Activated CD4-positive, alpha-beta T cell treated with anti-CD3 and anti-CD28 coated beads for 36 hours (primary cell): ENCODE measurements at regions of chr11 and their contacts with region 1.

Region 1: DNA sequence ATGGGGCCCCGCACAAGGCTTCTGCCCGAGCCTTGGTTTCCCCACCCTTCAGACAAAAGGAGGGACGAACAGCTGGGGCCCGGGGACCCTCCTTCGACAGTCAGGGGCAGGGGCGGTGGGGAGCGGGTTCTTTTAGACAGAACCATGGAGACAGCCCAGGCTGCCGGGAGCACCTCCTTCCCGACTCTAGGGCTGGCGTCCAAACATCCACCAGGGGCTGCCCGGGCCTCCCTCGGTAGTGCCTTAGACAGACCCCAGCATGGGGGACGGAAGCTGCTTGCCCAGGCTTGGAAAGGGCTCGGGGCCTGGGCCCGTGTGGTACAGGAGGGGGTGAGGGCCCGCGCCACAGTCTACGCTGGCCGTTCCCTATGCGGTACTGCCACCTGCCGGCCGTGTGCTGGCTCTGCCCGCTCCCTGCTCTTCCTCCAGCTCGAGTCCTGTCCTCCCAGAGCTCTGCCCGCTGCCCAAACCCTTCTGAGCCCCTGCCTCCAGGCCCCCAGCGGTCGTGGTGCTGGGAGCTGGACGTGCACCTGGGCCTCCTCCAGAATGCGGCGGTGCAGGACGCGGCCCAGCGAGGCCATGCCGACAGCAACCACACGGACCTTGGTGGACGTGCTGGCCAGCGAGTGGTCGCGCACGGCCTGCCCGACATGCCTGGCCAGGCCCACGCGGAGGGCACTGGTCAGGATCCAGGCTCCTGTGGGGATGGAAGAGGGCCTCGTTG is 20.1 kb downstream of the TSSC4 start:
- DNase-seq: peak; percentile 85
- ATAC-seq: peak; percentile 96
- H3K4me3 Mint-ChIP-seq: no peak overlapping the region
- H3K27ac Mint-ChIP-seq: no peak overlapping the region
- H3K4me1 Mint-ChIP-seq: no peaks in the 10 kb centered on the region
- H3K27me3 Mint-ChIP-seq: no peaks in the 10 kb centered on the region

Region 2: GRCh38 chr11:2166091-2166851 is 254.4 kb before region 1 on chr11:
- CTCF ChIA-PET with region 1: interaction called, 9 read pairs
- POLR2A ChIA-PET with region 1: no interaction called
- intact Hi-C with region 1: loop called (anchors 1 kb)
- DNase-seq: peak; percentile 67
- ATAC-seq: peak; percentile 73
- H3K4me3 Mint-ChIP-seq: no peak overlapping the region
- H3K27ac Mint-ChIP-seq: no peak overlapping the region
- H3K4me1 Mint-ChIP-seq: no peaks in the 10 kb centered on the region
- H3K27me3 Mint-ChIP-seq: peaks cover 3% of the 10 kb centered on the region

Region 3: DNA sequence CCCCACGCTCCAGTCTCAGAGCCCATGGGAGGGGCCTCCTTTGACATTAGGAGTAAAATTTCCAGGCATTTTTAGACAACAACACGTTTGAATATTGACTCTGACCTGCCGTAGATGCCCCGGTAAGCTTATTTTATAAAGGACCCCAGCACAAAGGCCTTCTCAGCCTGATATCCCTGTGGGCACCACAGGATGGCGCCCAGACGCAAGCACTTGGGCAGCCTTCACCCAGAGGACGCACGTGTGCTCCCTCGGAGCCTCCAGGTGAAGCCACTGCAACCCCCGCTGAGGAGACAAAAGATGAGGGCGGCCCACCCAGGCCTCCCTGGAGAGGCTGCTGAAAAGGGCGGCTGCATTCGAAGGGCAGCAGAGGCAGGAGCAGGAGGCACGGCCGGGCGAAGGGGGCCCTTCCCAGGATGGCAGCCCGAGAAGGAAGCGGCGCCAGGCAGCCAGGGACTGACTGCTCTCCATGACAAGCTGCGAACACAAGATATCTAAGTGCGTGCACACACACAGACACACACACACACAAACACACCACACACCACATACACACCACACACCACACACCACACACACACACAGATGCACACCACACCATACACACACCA is 233.9 kb before region 1 on chr11:
- CTCF ChIA-PET with region 1: interaction called, 19 read pairs
- POLR2A ChIA-PET with region 1: no interaction called
- intact Hi-C with region 1: loop called (anchors 1 to 2 kb)
- DNase-seq: peak; percentile 74
- ATAC-seq: peak; percentile 89
- H3K4me3 Mint-ChIP-seq: no peak overlapping the region
- H3K27ac Mint-ChIP-seq: no peak overlapping the region
- H3K4me1 Mint-ChIP-seq: no peaks in the 10 kb centered on the region
- H3K27me3 Mint-ChIP-seq: peaks cover 9% of the 10 kb centered on the region

Region 4: GRCh38 chr11:2196970-2197770 is 223.5 kb before region 1 on chr11:
- CTCF ChIA-PET with region 1: interaction called, 30 read pairs
- POLR2A ChIA-PET with region 1: no interaction called
- intact Hi-C with region 1: loop called (anchors 1 kb)
- DNase-seq: peak; percentile 89
- ATAC-seq: peak; percentile 98
- H3K4me3 Mint-ChIP-seq: no peak overlapping the region
- H3K27ac Mint-ChIP-seq: no peak overlapping the region
- H3K4me1 Mint-ChIP-seq: no peaks in the 10 kb centered on the region
- H3K27me3 Mint-ChIP-seq: peaks cover 8% of the 10 kb centered on the region

Region 5: GRCh38 chr11:2305140-2305840 is 115.4 kb before region 1 on chr11:
- CTCF ChIA-PET with region 1: interaction called, 102 read pairs
- POLR2A ChIA-PET with region 1: no interaction called
- intact Hi-C with region 1: loop called (anchors 1 kb)
- DNase-seq: peak; percentile 86
- ATAC-seq: peak; percentile 23
- H3K4me3 Mint-ChIP-seq: no peak overlapping the region
- H3K27ac Mint-ChIP-seq: no peak overlapping the region
- H3K4me1 Mint-ChIP-seq: peaks cover 50% of the 10 kb centered on the region
- H3K27me3 Mint-ChIP-seq: no peaks in the 10 kb centered on the region

Region 6: DNA sequence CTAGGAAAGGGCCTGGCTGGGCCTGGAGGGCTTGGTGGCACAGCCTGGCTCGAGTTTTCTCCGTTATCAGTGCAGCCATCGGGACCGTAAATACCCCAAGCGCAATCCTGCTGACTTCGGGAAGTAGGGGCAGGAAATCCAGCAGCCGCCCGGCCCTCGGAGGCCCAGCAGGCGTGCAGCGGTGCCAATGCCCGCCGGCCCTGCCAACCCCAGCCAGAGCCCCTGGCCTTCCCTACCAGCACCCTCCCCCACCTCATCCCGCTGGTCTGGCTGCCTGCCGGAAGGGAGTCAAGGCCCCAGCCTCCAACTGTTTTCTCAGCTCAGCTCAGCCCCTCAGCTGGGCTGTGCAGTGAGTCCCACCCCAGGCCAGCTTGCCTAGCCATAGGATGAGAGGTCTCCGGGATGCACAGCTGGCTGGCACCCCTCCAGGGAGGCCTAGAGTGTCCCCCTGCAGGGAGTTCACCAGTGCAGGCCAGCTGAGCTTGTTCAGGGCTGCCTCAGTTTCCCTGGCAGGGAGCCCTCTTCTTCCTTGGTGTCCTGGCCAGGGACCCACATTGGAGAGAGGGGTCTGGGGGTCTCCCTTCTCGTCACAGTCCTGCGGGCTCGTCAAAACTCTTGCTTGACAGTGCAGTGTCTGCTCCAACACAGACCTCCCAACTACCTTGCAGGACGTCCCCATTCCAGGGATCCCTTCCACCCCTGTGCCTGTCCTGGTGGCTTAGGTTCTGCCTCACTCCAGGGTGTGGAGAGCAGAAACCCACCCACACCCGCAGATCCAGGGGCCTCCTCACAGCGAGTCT is 359.8 kb after region 1 on chr11:
- CTCF ChIA-PET with region 1: no interaction called
- POLR2A ChIA-PET with region 1: no interaction called
- intact Hi-C with region 1: no loop called
- DNase-seq: peak; percentile 1
- ATAC-seq: no peak
- H3K4me3 Mint-ChIP-seq: no peak overlapping the region
- H3K27ac Mint-ChIP-seq: no peak overlapping the region
- H3K4me1 Mint-ChIP-seq: no peaks in the 10 kb centered on the region
- H3K27me3 Mint-ChIP-seq: no peaks in the 10 kb centered on the region